ENCODE measurements at regions of chr16 and their contacts with region 1.

Region 1: DNA sequence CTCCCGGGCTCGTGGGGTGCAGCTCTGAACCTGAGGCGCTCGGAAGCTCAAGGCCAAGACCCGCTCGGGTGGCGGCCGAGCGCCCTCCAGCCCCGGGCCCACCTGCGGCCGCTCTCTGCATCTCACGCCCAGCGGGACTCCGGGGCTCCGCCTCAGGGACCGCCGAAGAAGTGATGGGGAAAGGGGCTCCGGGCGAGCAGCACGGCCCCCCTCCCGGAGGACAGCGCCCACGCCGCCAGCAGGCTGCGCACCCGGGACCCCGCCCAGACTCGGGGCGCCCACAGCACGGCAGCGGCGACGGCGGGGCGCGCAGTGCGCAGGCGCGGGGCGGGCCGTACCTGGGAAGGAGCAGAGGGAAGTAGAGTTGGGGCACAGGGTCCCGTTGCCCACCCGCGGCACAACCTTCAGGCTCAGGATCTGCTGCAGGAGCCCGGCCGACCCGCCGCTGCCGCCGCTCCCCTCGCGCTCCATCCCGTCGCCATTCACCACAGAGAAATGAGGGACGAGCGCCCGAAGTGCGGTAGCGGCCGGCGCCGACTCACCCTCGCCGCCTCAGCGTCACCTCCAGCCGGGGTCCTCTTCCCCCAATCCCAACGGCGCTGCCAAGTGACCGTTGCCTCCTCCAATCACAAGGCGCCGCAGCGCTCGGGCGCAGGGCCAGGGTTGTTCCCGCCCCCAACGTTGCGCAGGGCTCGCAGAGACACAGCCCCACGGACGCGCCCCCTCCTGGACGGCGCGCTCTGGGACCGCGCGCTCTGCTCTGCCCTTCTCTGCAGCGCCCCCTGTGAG is at the start of gene TMEM170A:
- DNase-seq: peak; percentile 99
- H3K4me3 Mint-ChIP-seq: peak within 1 kb of the TSS; percentile 87
- H3K27ac Mint-ChIP-seq: peak within 1 kb of the TSS; percentile 88
- H3K4me1 Mint-ChIP-seq: peaks cover 43% of the 10 kb centered on the region
- H3K27me3 Mint-ChIP-seq: no peaks in the 10 kb centered on the region
- total RNA-seq, gene TMEM170A: 18.8 to 19.0 TPM

Region 2: DNA sequence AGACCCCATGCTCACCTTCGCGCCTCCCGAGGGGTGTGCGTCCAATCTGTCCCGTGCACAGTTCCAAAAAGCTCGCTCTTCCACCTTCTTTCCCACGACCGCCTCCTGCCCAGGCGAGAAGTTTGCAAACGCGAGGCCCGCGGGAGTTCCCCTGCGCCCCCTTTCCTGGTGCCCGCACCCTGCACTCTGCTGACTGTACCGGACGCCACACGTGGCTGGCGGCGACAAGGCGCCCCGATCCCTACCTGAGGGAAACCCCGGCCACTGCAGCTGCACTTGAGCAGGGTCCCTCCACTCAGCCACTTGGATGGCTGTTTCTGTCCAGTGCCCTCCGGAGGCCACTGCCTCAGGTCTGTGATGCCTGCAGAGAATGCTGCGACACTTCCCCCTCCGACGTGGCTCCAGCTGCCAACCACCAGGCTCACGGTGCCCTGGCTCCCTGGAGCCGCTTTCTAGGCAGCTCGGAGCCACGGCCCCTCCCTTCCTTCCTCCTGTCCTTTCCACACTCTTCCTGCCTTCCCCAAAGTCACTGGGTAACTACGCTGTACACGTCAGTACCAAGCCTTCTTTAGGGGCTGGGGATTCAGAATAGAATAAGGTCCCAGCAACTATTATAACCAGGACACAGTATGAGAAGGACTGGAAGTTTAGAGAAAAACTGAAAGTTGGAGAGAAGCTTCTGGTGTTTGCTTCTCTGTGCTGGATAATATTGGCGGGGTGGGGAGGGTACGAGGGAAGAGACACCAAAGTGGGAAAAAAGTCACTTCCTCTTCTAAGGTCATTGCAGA is 763.7 kb before region 1 on chr16 and contains the start of gene MLKL:
- CTCF ChIA-PET with region 1: no interaction called
- intact Hi-C with region 1: loop called (anchors 2 kb)
- DNase-seq: peak; percentile 71
- H3K4me3 Mint-ChIP-seq: peak within 1 kb of the TSS; percentile 93
- H3K27ac Mint-ChIP-seq: peak within 1 kb of the TSS; percentile 96
- H3K4me1 Mint-ChIP-seq: peaks cover 61% of the 10 kb centered on the region
- H3K27me3 Mint-ChIP-seq: no peaks in the 10 kb centered on the region
- total RNA-seq, gene MLKL: 10.7 to 12.0 TPM

Region 3: GRCh38 chr16:75234856-75235696 is 229.2 kb before region 1 on chr16:
- CTCF ChIA-PET with region 1: interaction called, 5 read pairs
- intact Hi-C with region 1: loop called (anchors 1 kb)
- DNase-seq: no peak
- H3K4me3 Mint-ChIP-seq: no peak overlapping the region
- H3K27ac Mint-ChIP-seq: no peak overlapping the region
- H3K4me1 Mint-ChIP-seq: peaks cover 6% of the 10 kb centered on the region
- H3K27me3 Mint-ChIP-seq: no peaks in the 10 kb centered on the region

Region 4: DNA sequence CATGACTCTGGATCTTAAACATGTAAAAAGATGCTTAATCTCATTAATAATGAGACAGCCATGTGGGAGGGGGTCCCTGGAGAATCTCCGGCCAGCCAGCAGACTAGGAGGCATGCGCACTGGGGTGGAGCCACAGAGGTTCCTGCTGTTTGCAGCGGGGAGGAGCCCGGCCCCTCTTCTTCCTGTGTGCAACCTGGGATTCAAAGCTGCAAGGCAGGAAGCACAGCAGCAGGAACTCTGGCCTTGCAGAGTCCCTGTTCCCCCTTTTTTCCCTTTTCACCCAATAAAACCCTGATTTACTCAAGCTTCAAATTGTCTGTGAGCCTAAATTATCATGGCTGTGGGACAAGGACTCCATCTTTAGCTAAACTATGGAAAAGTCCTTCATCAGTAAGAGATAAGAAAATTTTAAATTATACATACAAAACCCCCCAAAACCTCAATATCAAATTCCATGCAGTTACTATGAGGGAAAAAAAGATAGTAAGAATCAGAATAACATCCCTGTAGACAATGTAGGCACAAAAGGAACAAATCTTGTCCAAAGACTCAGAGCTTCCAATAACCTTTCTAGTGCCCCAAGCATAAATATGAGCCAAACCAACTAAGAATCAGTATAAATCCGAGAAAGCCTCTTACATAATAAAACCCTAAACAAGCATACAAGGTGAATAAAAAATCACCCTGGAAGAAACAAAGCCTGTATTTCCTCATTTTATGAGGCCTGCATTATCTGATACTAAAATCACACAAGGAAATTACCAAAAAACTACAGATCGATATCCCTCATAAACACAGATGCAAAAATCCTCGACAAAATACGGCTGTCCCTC is 43.1 kb before region 1 on chr16:
- CTCF ChIA-PET with region 1: no interaction called
- intact Hi-C with region 1: loop called (anchors 1 kb)
- DNase-seq: peak; percentile 61
- H3K4me3 Mint-ChIP-seq: peak overlapping the region; percentile 68
- H3K27ac Mint-ChIP-seq: peak overlapping the region; percentile 8
- H3K4me1 Mint-ChIP-seq: peaks cover 44% of the 10 kb centered on the region
- H3K27me3 Mint-ChIP-seq: no peaks in the 10 kb centered on the region

Region 5: DNA sequence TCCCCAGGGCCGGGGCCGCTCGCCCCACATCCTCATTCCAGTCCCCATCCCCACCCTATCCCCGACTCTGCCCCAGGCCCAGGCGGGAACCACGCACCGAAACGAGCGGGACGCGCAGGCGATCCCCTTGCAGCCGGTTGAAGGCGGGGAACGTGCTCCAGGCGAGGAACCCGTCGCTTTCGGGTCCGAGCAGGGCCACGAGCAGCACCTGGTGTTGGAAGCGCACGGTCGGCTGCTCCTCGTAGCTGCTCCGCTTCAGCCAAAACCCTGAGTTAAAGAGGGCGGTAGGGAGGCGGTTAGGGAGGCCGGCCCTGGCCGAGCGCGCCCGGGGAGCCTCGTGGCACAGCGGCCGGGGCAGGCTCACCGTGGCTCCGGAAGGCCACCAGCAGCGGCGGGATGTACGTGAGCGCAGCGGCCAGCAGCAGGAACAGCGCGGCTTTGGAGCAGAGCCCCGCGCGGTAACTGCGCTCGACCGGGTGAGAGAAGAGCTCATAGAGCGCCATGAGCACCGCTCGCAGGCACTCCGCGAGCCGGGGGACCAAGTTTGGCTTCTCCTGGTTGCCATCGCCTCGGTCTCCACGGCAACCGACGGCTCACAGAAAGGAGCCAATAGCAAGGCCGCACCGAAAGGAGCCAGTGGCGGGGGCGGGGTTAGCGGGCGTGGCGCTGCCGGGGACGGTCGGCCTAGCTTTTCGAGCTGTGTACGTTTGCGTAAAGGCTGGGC is 91.5 kb after region 1 on chr16 and contains the start of gene TMEM231:
- CTCF ChIA-PET with region 1: interaction called, 5 read pairs
- intact Hi-C with region 1: loop called (anchors 1 kb)
- DNase-seq: peak; percentile 98
- H3K4me3 Mint-ChIP-seq: peak within 1 kb of the TSS; percentile 87
- H3K27ac Mint-ChIP-seq: peak within 1 kb of the TSS; percentile 77
- H3K4me1 Mint-ChIP-seq: peaks cover 5% of the 10 kb centered on the region
- H3K27me3 Mint-ChIP-seq: peaks cover 8% of the 10 kb centered on the region
- total RNA-seq, gene TMEM231: 4.5 to 5.4 TPM

Region 6: DNA sequence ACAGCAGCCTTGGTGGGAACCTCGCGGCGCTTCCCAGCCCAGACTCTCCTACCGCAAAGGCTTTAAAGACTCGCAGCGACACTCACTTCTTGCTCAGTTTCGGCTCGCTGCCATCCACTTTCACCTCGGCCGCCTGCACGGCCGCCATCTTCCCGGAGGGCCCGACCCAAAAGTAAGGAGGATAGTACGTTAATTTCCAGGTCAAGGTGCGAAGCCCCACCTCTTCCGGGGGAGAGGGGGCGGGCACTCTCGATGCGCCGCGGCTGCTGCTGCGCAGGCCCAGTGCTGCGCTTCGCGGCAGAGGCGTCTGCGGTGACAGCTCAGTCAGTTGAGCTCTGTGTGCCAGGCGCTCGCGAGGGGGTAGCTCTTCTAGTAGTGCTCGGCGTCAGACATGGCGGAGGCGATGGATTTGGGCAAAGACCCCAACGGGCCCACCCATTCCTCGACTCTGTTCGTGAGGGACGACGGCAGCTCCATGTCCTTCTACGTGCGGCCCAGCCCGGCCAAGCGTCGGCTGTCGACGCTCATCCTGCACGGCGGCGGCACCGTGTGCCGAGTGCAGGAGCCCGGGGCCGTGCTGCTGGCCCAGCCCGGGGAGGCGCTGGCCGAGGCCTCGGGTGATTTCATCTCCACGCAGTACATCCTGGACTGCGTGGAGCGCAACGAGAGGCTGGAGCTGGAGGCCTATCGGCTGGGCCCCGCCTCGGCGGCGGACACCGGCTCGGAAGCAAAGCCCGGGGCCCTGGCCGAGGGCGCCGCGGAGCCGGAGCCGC is 183.4 kb after region 1 on chr16 and contains the starts of genes KARS1 and TERF2IP:
- CTCF ChIA-PET with region 1: interaction called, 6 read pairs
- intact Hi-C with region 1: loop called (anchors 1 kb)
- DNase-seq: peak; percentile 96
- H3K4me3 Mint-ChIP-seq: peak within 1 kb of the TSS; percentile 96
- H3K27ac Mint-ChIP-seq: peak within 1 kb of the TSS; percentile 98
- H3K4me1 Mint-ChIP-seq: peaks cover 62% of the 10 kb centered on the region
- H3K27me3 Mint-ChIP-seq: no peaks in the 10 kb centered on the region
- total RNA-seq, gene KARS1: 371 to 385 TPM
- total RNA-seq, gene TERF2IP: 78.6 to 79.0 TPM

Region 7: GRCh38 chr16:75758215-75758614 is 293.9 kb after region 1 on chr16:
- CTCF ChIA-PET with region 1: no interaction called
- intact Hi-C with region 1: no loop called
- DNase-seq: no peak
- H3K4me3 Mint-ChIP-seq: no peak overlapping the region
- H3K27ac Mint-ChIP-seq: no peak overlapping the region
- H3K4me1 Mint-ChIP-seq: peaks cover 12% of the 10 kb centered on the region
- H3K27me3 Mint-ChIP-seq: peaks cover 3% of the 10 kb centered on the region